ENCODE measurements at regions of chrX and their contacts with region 1.

Region 1: GRCh38 chrX:15471016-15471415 is 22.1 kb downstream of the PIR start:
- DNase-seq: peak; percentile 72
- H3K4me3 Mint-ChIP-seq: no peak overlapping the region
- H3K27ac Mint-ChIP-seq: peak overlapping the region; percentile 30
- H3K4me1 Mint-ChIP-seq: peaks cover 27% of the 10 kb centered on the region
- H3K27me3 Mint-ChIP-seq: no peaks in the 10 kb centered on the region
- CTCF ChIP-seq: peak; percentile 62

Region 2: DNA sequence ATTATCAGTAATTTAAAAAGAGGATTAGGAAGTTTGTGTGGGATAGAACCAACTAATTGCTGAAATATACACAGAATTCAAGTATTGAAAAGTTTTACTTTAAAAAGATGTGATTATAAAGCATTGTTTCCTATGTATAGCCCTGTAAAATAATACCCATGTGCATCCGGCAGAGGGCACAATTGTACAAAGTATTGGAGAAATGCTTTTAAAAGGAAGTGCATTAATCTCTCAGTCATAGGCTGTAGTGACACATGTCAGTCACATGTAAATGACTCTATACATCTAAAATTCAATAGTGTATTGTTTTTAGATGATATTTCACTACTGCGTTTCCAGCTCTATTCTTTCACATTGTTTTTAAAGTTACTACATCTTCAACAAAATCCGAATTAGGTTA is 1431.7 kb before region 1 on chrX:
- CTCF ChIA-PET with region 1: no interaction called
- intact Hi-C with region 1: loop called (anchors 5 kb)
- DNase-seq: peak; percentile 56
- H3K4me3 Mint-ChIP-seq: no peak overlapping the region
- H3K27ac Mint-ChIP-seq: no peak overlapping the region
- H3K4me1 Mint-ChIP-seq: no peaks in the 10 kb centered on the region
- H3K27me3 Mint-ChIP-seq: no peaks in the 10 kb centered on the region
- CTCF ChIP-seq: peak; percentile 34

Region 3: GRCh38 chrX:15349046-15349445 is 122.0 kb before region 1 on chrX:
- CTCF ChIA-PET with region 1: no interaction called
- intact Hi-C with region 1: loop called (anchors 2 kb)
- DNase-seq: peak; percentile 37
- H3K4me3 Mint-ChIP-seq: no peak overlapping the region
- H3K27ac Mint-ChIP-seq: no peak overlapping the region
- H3K4me1 Mint-ChIP-seq: no peaks in the 10 kb centered on the region
- H3K27me3 Mint-ChIP-seq: no peaks in the 10 kb centered on the region
- CTCF ChIP-seq: peak; percentile 36

Region 4: DNA sequence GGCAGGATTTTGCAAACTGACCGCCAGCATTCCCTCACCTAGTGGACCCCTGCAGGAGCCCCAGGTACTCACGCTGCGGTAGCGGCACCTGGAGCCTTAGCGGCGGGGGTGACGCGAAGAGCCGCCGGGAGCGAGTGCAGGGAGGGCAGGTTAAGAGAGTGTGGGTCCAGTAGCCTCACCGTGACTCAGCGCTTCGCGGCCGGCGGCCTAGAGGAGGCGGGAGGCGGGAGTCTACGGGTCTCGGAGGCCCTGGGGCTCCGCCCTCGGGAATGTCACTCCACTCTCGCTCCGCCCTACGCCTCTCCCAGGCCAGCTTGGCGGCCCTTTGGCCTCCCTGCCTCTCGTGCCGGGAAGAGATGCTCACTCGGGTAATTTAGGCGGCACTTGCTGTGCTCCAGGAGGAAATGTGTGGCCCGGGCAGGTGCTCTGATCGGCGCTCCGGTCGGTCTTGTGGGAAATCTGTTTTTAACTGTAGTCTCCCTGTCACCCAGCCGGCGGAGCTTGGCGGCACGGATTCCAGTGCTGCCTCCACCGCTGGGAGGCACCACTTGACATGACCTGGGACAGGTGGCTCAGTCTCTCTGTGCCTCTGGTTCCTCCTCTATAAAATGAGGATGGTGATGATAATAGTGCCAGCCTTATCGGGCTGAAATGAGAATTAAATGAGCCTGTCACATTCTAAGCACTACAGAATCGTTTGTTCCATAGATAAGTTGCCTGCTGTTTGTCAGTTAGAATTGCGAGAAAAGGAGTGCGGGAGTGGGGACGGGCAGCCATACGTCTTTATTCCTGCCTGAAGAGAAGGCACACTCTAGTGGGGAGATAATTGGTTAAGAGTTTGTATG is 22.3 kb after region 1 on chrX and contains the start of gene PIR:
- CTCF ChIA-PET with region 1: interaction called, 8 read pairs
- intact Hi-C with region 1: loop called (anchors 2 kb)
- DNase-seq: peak; percentile 92
- H3K4me3 Mint-ChIP-seq: peak within 1 kb of the TSS; percentile 85
- H3K27ac Mint-ChIP-seq: peak within 1 kb of the TSS; percentile 46
- H3K4me1 Mint-ChIP-seq: peaks cover 22% of the 10 kb centered on the region
- H3K27me3 Mint-ChIP-seq: no peaks in the 10 kb centered on the region
- CTCF ChIP-seq: no peak
- total RNA-seq, gene PIR: 32.1 and 40.9 TPM in 2 replicates

Region 5: DNA sequence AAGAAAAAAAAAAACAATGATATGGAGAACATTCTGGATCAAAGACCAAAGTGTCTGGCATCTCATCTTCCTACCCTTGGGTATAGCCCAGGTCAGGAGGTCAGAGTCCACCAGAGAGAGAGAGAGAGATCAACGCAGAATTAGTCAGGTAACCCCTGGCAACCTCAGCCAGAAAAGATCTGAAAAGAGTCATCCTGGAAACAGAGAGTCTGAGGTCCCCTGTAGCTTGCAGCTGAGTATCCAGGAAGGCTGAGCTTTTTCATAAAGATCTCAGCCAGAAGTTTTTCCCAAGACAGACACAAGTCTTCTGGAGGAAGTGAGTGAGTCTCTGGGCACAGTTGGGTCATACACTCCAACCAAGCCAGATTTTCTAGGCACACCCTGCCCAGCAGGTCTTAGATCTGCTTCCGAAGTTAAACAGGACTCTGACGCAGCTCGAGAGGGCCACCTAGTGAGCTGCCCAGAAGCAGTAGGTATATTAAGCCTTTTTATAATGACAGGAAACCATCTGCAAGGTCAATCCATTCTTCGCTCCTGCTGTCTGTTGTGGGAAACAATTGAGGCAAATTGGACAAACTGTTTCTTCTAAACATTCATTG is 94.1 kb after region 1 on chrX:
- CTCF ChIA-PET with region 1: interaction called, 8 read pairs
- intact Hi-C with region 1: loop called (anchors 2 kb)
- DNase-seq: peak; percentile 70
- H3K4me3 Mint-ChIP-seq: no peak overlapping the region
- H3K27ac Mint-ChIP-seq: peak overlapping the region; percentile 47
- H3K4me1 Mint-ChIP-seq: peaks cover 14% of the 10 kb centered on the region
- H3K27me3 Mint-ChIP-seq: no peaks in the 10 kb centered on the region
- CTCF ChIP-seq: peak; percentile 29

Measured in Calu3 (cell line).